ENCODE measurements at regions of chr4 and their contacts with region 1.

Region 1: DNA sequence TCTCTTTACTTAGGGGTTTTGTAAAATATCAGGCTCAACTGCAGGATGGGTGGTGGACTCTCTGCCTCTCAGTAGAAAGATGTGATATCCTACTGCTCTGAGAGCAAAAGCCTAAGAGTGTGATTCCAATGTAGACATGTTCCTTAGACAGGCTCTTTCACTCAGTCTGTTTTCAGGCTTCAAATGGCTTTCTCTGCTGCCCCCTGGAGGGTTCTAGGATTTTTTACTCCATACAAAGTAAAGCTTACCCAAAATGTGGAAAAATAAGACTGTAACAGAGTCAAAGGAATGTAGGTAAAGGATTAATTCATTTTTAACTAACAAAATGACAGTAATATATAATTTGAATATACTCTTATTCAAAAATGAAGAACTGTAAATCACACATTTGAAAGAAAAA is 32.1 kb downstream of the ZGRF1 start:
- DNase-seq: peak; percentile 42
- H3K4me3 Mint-ChIP-seq: no peak overlapping the region
- H3K27ac Mint-ChIP-seq: no peak overlapping the region
- H3K4me1 Mint-ChIP-seq: no peaks in the 10 kb centered on the region
- H3K27me3 Mint-ChIP-seq: no peaks in the 10 kb centered on the region
- CTCF ChIP-seq: peak; percentile 33

Region 2: DNA sequence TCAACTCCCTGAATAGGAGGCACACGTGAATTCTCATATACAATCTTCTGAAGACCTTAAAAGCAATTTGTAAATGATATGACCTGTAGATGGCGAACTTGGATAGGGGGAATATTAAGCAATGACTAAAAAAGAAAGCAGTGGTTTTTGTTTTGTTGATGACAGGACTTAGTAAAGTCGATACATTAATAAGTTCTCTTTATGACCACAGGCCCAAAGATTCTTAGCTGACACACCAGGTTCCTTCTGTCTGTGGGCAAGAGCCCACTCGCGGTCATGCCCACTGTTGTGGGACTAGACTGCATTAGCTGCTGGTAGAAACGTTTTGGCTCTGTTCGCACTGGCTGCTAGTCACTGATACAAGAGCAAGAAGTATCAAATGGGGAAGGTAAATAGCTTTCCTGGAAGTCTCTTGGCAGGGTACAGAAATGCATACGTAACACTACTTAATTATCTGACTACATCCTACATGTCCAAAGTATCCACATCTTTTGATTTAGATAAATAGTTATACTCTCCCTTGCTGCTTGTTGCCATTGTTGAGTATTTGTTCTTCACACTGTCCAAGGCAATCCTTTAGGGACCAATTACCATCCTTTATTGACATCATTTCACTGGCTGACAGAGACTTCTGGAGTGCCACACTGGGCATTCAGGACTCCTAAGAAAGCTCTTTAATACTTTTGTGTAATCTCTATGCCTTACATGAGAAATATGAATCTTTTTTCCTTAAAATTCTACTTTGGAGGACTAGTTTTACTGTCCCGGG is 276.4 kb before region 1 on chr4:
- CTCF ChIA-PET with region 1: interaction called, 5 read pairs
- intact Hi-C with region 1: loop called (anchors 1 kb)
- DNase-seq: no peak
- H3K4me3 Mint-ChIP-seq: no peak overlapping the region
- H3K27ac Mint-ChIP-seq: no peak overlapping the region
- H3K4me1 Mint-ChIP-seq: no peaks in the 10 kb centered on the region
- H3K27me3 Mint-ChIP-seq: no peaks in the 10 kb centered on the region
- CTCF ChIP-seq: no peak

Region 3: GRCh38 chr4:112472318-112472717 is 132.3 kb before region 1 on chr4:
- CTCF ChIA-PET with region 1: no interaction called
- intact Hi-C with region 1: no loop called
- DNase-seq: no peak
- H3K4me3 Mint-ChIP-seq: no peak overlapping the region
- H3K27ac Mint-ChIP-seq: no peak overlapping the region
- H3K4me1 Mint-ChIP-seq: no peaks in the 10 kb centered on the region
- H3K27me3 Mint-ChIP-seq: no peaks in the 10 kb centered on the region
- CTCF ChIP-seq: no peak

Region 4: DNA sequence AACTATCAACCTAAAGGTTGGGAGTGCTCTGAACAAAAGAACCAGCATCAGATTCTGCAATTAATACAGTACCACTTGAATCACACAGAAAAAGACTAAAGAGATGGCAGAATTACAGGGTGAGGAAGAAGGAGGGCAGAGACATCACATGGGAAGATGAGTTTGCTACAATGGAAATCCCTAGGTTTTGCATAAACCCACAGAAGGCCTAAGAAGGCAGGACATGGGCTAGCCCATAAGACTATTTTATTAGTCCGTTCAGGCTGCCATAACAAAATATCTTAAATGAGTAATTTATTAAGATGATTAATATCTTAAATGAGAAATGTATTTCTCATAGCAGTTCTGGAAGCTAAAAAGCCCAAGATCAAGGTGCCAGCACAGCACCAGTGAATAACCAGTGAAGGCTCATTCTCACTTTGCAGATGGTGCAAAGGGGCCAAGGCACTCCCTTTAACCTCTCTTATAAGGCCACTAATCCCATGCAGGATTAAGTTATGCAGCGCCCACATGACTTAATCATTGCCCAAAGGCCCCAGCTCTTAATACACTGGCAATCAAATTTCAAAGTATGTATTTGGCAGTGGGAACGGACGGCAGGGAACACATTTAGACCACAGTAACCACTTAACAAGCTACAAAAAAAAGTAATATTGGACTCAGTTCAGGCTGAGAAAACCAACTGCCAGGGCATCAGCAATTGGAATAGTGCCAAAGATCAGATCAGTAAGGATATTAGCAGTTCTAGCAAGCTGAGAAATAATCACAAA is 41.0 kb before region 1 on chr4:
- CTCF ChIA-PET with region 1: no interaction called
- intact Hi-C with region 1: no loop called
- DNase-seq: no peak
- H3K4me3 Mint-ChIP-seq: no peak overlapping the region
- H3K27ac Mint-ChIP-seq: no peak overlapping the region
- H3K4me1 Mint-ChIP-seq: no peaks in the 10 kb centered on the region
- H3K27me3 Mint-ChIP-seq: no peaks in the 10 kb centered on the region
- CTCF ChIP-seq: no peak

Region 5: GRCh38 chr4:112994732-112995464 is 390.3 kb after region 1 on chr4:
- CTCF ChIA-PET with region 1: no interaction called
- intact Hi-C with region 1: no loop called
- DNase-seq: no peak
- H3K4me3 Mint-ChIP-seq: no peak overlapping the region
- H3K27ac Mint-ChIP-seq: no peak overlapping the region
- H3K4me1 Mint-ChIP-seq: peaks cover 8% of the 10 kb centered on the region
- H3K27me3 Mint-ChIP-seq: no peaks in the 10 kb centered on the region
- CTCF ChIP-seq: no peak

Measured in Calu3 (cell line).